AG04449 (cell line): ENCODE measurements at regions of chr11 and their contacts with region 1.

Region 1: GRCh38 chr11:10540923-10541560 is at the start of gene RNF141:
- DNase-seq: no peak
- H3K4me3 ChIP-seq: peak within 1 kb of the TSS; percentile 79
- CTCF ChIP-seq: peak; percentile 97

Region 2: GRCh38 chr11:9160166-9160565 is 1380.9 kb before region 1 on chr11:
- CTCF ChIA-PET with region 1: no interaction called
- POLR2A ChIA-PET with region 1: no interaction called
- DNase-seq: no peak
- H3K4me3 ChIP-seq: no peak overlapping the region
- CTCF ChIP-seq: no peak

Region 3: DNA sequence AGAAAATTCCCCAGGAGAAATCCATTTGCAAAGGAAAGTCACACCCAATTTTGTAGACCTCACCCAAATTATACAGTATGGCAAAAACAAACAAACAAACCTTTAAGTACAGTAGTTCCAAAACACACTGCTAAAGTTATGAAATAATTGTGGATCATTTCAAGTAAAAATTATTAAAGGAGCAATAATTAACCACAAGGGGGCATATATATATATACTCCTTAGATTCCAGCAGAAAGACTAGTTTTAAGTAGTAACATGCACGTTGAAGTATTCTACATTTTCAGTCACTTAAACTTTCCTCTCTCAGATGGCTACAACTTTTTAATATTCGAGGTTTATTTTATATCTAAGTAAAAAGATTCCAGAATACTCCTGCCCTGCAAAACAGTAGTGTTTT is 26.8 kb before region 1 on chr11:
- CTCF ChIA-PET with region 1: interaction called, 22 read pairs
- POLR2A ChIA-PET with region 1: no interaction called
- DNase-seq: no peak
- H3K4me3 ChIP-seq: no peak overlapping the region
- CTCF ChIP-seq: no peak

Region 4: GRCh38 chr11:10556590-10556989 is 15.5 kb after region 1 on chr11:
- CTCF ChIA-PET with region 1: interaction called, 33 read pairs
- POLR2A ChIA-PET with region 1: no interaction called
- DNase-seq: no peak
- H3K4me3 ChIP-seq: no peak overlapping the region
- CTCF ChIP-seq: no peak

Region 5: GRCh38 chr11:10575346-10576034 is 34.4 kb after region 1 on chr11:
- CTCF ChIA-PET with region 1: interaction called, 10 read pairs
- POLR2A ChIA-PET with region 1: no interaction called
- DNase-seq: no peak
- H3K4me3 ChIP-seq: no peak overlapping the region
- CTCF ChIP-seq: no peak

Region 6: DNA sequence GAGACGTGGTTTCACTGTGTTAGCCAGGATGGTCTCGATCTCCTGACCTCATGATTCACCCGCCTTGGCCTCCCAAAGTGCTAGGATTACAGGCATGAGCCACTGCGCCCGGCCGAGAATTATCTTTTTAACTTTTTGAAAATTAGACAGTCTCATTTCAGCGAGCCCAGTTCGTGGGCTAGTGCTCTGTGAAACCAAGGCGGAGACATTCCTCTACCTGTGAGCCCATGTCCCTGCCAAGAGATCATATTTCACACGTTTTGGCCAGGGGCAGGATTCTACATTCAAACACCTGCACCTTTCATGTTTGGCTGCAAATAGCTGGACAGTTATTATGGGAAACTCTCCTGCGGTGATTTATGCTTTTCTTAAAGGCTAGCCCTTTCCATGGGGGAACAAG is 92.2 kb after region 1 on chr11:
- CTCF ChIA-PET with region 1: no interaction called
- POLR2A ChIA-PET with region 1: no interaction called
- DNase-seq: no peak
- H3K4me3 ChIP-seq: no peak overlapping the region
- CTCF ChIP-seq: no peak

Region 7: GRCh38 chr11:10663990-10664389 is 122.9 kb after region 1 on chr11:
- CTCF ChIA-PET with region 1: interaction called, 11 read pairs
- POLR2A ChIA-PET with region 1: no interaction called
- DNase-seq: no peak
- H3K4me3 ChIP-seq: no peak overlapping the region
- CTCF ChIP-seq: no peak